ENCODE measurements at regions of chr18 and their contacts with region 1.

Region 1: DNA sequence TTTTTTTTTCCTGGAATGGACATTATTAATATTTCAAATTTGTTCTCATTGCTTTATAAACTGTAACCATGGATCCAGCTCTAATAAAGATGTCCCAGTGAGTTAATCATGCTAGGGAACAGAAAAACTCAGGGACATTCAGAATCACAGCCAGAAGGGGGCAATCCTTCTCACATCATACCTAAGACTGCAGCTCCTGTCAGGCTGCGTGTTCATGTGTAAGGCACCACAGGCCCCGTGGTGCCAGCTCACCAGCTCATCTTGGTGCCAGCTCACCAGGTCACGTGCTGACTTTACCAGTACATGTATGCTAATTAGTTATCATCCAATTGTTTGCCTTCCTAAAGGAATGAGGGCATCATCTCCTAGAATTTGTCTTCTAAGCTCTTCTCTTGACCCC is 84.7 kb upstream of the NEDD4L start:
- DNase-seq: peak; percentile 62
- ATAC-seq: peak; percentile 82
- H3K4me3 ChIP-seq: no peak overlapping the region
- H3K4me3 Mint-ChIP-seq: no peak overlapping the region
- H3K27ac ChIP-seq: no peak overlapping the region
- H3K27ac Mint-ChIP-seq: no peak overlapping the region
- H3K4me1 ChIP-seq: no peaks in the 10 kb centered on the region
- H3K4me1 Mint-ChIP-seq: peaks cover 2% of the 10 kb centered on the region
- H3K27me3 ChIP-seq: peaks cover 0 to 3% (median 2%) of the 10 kb centered on the region in 4 experiments
- H3K27me3 Mint-ChIP-seq: peaks cover 2% of the 10 kb centered on the region
- CTCF ChIP-seq: peak; percentile 49

Region 2: GRCh38 chr18:58015065-58015780 is 55.9 kb after region 1 on chr18:
- CTCF ChIA-PET with region 1: no interaction called
- POLR2A ChIA-PET with region 1: no interaction called
- intact Hi-C with region 1: no loop called
- DNase-seq: peak; percentile 84
- ATAC-seq: peak; percentile 100
- H3K4me3 ChIP-seq: peak overlapping the region in 1 of 5 experiments; percentile 4
- H3K4me3 Mint-ChIP-seq: peak overlapping the region; percentile 67
- H3K27ac ChIP-seq: peak overlapping the region in 1 of 2 donors; percentile 69
- H3K27ac Mint-ChIP-seq: peak overlapping the region; percentile 78
- H3K4me1 ChIP-seq: peaks cover 23 to 34% of the 10 kb centered on the region in 2 donors
- H3K4me1 Mint-ChIP-seq: peaks cover 31% of the 10 kb centered on the region
- H3K27me3 ChIP-seq: no peaks in the 10 kb centered on the region
- H3K27me3 Mint-ChIP-seq: peaks cover 12% of the 10 kb centered on the region
- CTCF ChIP-seq: no peak

Region 3: DNA sequence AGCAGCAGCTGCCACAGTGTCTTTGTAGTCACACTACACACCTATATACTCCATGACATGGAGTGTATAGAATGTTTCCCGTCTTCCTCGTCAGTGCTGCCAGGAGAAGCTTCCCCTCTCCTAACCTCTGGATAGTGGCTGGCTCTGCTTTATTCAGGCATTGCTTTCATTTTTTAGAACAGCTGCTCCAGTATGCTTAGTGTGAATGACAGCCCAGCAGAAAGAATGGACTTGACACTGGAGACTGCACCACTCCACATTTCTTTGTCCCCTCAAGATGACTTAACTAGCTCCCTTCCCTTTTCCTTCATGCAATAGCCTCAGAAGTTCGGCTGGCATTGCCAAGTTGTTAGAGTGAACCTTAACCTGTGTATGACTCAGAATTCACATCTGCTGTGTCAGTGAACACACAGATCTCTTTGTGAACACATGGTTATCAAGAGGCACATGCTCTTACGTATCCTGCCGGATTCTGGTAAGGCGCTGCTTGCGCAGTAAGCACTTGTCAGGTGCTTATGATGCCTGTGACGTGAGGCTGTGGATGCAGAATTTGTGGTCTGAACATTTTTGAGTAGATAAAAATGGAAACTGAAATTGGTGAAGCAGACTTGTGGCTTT is 158.6 kb after region 1 on chr18:
- CTCF ChIA-PET with region 1: interaction called, 118 read pairs
- POLR2A ChIA-PET with region 1: no interaction called
- intact Hi-C with region 1: loop called (anchors 1 kb)
- DNase-seq: no peak
- ATAC-seq: no peak
- H3K4me3 ChIP-seq: no peak overlapping the region
- H3K4me3 Mint-ChIP-seq: no peak overlapping the region
- H3K27ac ChIP-seq: no peak overlapping the region
- H3K27ac Mint-ChIP-seq: no peak overlapping the region
- H3K4me1 ChIP-seq: peaks cover 5 to 6% of the 10 kb centered on the region in 2 donors
- H3K4me1 Mint-ChIP-seq: peaks cover 7% of the 10 kb centered on the region
- H3K27me3 ChIP-seq: peaks cover 0 to 3% (median 0%) of the 10 kb centered on the region in 4 experiments
- H3K27me3 Mint-ChIP-seq: no peaks in the 10 kb centered on the region
- CTCF ChIP-seq: no peak

Region 4: GRCh38 chr18:58128381-58129374 is 169.4 kb after region 1 on chr18:
- CTCF ChIA-PET with region 1: interaction called, 118 read pairs
- POLR2A ChIA-PET with region 1: no interaction called
- intact Hi-C with region 1: no loop called
- DNase-seq: no peak
- ATAC-seq: no peak
- H3K4me3 ChIP-seq: no peak overlapping the region
- H3K4me3 Mint-ChIP-seq: no peak overlapping the region
- H3K27ac ChIP-seq: no peak overlapping the region
- H3K27ac Mint-ChIP-seq: no peak overlapping the region
- H3K4me1 ChIP-seq: peaks cover 0 to 4% of the 10 kb centered on the region in 2 donors
- H3K4me1 Mint-ChIP-seq: no peaks in the 10 kb centered on the region
- H3K27me3 ChIP-seq: no peaks in the 10 kb centered on the region
- H3K27me3 Mint-ChIP-seq: no peaks in the 10 kb centered on the region
- CTCF ChIP-seq: no peak

Region 5: GRCh38 chr18:58135701-58136331 is 176.5 kb after region 1 on chr18:
- CTCF ChIA-PET with region 1: interaction called, 34 read pairs
- POLR2A ChIA-PET with region 1: no interaction called
- intact Hi-C with region 1: loop called (anchors 5 kb)
- DNase-seq: peak; percentile 75
- ATAC-seq: peak; percentile 71
- H3K4me3 ChIP-seq: no peak overlapping the region
- H3K4me3 Mint-ChIP-seq: peak overlapping the region; percentile 48
- H3K27ac ChIP-seq: no peak overlapping the region
- H3K27ac Mint-ChIP-seq: no peak overlapping the region
- H3K4me1 ChIP-seq: peaks cover 10 to 13% of the 10 kb centered on the region in 2 donors
- H3K4me1 Mint-ChIP-seq: peaks cover 19% of the 10 kb centered on the region
- H3K27me3 ChIP-seq: peaks cover 0 to 4% (median 0%) of the 10 kb centered on the region in 4 experiments
- H3K27me3 Mint-ChIP-seq: peaks cover 4% of the 10 kb centered on the region
- CTCF ChIP-seq: peak; percentile 87

Region 6: GRCh38 chr18:58180738-58181353 is 221.6 kb after region 1 on chr18:
- CTCF ChIA-PET with region 1: interaction called, 12 read pairs
- POLR2A ChIA-PET with region 1: no interaction called
- intact Hi-C with region 1: no loop called
- DNase-seq: peak; percentile 71
- ATAC-seq: peak; percentile 62
- H3K4me3 ChIP-seq: no peak overlapping the region
- H3K4me3 Mint-ChIP-seq: no peak overlapping the region
- H3K27ac ChIP-seq: no peak overlapping the region
- H3K27ac Mint-ChIP-seq: no peak overlapping the region
- H3K4me1 ChIP-seq: no peaks in the 10 kb centered on the region
- H3K4me1 Mint-ChIP-seq: peaks cover 3% of the 10 kb centered on the region
- H3K27me3 ChIP-seq: no peaks in the 10 kb centered on the region
- H3K27me3 Mint-ChIP-seq: no peaks in the 10 kb centered on the region
- CTCF ChIP-seq: peak; percentile 94

Measured in B cell (primary cell).